Tibial artery (tissue), 4 donors: ENCODE measurements at regions of chr1 and their contacts with region 1.

Region 1: GRCh38 chr1:202710070-202711045 is at the start of gene SYT2:
- DNase-seq: no peak
- H3K4me3 ChIP-seq: peak within 1 kb of the TSS; percentile 19 to 42
- H3K27ac ChIP-seq: no peak within 1 kb of the TSS
- H3K4me1 ChIP-seq: peaks cover 0 to 22% (median 16%) of the 10 kb centered on the region in 4 donors
- H3K27me3 ChIP-seq: peaks cover 0 to 63% of the 10 kb centered on the region in 2 donors
- CTCF ChIP-seq: no peak

Region 2: DNA sequence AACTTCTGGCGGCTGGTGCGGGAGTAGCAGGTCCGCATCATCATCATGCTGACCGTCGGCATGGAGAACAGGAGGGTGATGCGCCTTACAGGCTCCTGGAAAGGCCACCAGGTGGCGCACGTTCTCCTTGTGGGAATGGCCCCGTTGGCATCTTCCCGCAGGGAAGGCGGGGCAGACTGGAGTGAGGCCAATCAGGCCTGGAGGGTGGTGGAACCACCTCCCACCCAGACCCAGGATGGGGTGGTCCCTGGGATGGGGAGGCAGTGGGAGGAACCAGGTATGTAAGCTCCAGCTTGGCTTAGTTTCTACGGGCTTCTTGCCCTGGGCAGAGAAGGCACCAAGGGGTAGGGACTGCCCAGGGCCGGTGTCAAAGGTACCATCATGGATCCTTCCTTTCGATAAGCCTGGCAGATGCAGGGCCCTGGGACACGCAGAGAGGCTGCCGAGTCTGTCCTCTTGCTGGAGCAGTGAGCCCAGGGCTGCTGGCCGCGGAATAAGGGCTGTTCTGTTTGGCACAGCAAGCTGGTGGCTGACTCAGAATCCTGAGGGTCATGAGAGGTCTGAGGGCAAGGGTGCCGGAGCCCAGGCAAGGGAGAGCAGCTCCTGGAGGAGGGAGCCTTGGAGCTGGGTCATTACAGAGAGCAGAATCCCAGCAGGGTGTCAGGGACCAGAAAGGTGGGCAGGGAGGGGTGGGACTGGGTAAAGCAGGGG is 525.5 kb before region 1 on chr1:
- intact Hi-C with region 1: loop called (anchors 10 kb)
- DNase-seq: peak; percentile 69 to 84
- H3K4me3 ChIP-seq: no peak overlapping the region
- H3K27ac ChIP-seq: no peak overlapping the region
- H3K4me1 ChIP-seq: peaks cover 0 to 11% (median 8%) of the 10 kb centered on the region in 4 donors
- H3K27me3 ChIP-seq: peaks cover 0 to 32% of the 10 kb centered on the region in 2 donors
- CTCF ChIP-seq: peak; percentile 81 to 90

Region 3: GRCh38 chr1:202348509-202349205 is 361.7 kb before region 1 on chr1 and contains the start of gene PPP1R12B:
- intact Hi-C with region 1: loop called (anchors 10 kb)
- DNase-seq: peak; percentile 99
- H3K4me3 ChIP-seq: peak within 1 kb of the TSS; percentile 94 to 97
- H3K27ac ChIP-seq: peak within 1 kb of the TSS; percentile 89 to 90
- H3K4me1 ChIP-seq: peaks cover 0 to 25% (median 14%) of the 10 kb centered on the region in 4 donors
- H3K27me3 ChIP-seq: no peaks in the 10 kb centered on the region
- CTCF ChIP-seq: no peak

Region 4: DNA sequence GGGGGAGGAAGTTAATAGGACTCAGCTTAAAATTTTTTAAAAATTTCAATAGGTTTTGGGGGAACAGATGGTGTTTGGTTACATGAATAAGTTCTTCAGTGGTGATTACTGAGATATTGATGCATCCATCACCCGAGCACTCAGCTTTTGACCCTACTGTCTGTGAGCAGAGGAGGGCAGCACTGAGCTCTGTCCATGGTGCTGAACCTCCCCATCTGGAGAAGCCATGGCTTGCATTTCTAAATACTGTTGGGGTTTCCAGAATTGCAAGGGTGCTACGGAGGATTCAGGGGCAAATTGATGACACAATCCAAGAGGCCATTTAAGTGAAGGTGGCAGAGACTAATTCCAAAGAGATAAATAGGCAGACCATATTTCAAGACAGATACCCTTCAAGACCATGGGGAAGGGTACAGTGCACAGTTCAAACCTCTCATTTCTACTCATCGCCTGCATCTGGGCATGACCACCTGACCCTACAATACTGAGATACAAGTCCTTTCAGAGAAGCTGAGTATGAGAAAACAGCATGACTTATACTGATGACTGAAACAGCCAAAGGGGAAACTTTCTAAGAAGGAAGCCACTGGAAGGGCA is 17.3 kb before region 1 on chr1:
- intact Hi-C with region 1: no loop called
- DNase-seq: peak; percentile 61 to 62
- H3K4me3 ChIP-seq: no peak overlapping the region
- H3K27ac ChIP-seq: no peak overlapping the region
- H3K4me1 ChIP-seq: no peaks in the 10 kb centered on the region
- H3K27me3 ChIP-seq: peaks cover 0 to 48% of the 10 kb centered on the region in 2 donors
- CTCF ChIP-seq: peak; percentile 9 to 36

Region 5: GRCh38 chr1:202835548-202836090 is 125.3 kb after region 1 on chr1:
- intact Hi-C with region 1: no loop called
- DNase-seq: no peak
- H3K4me3 ChIP-seq: no peak overlapping the region
- H3K27ac ChIP-seq: no peak overlapping the region
- H3K4me1 ChIP-seq: no peaks in the 10 kb centered on the region
- H3K27me3 ChIP-seq: peaks cover 0 to 16% of the 10 kb centered on the region in 2 donors
- CTCF ChIP-seq: no peak